Posterior vena cava (tissue), 2 donors: ENCODE measurements at regions of chr16 and their contacts with region 1.

Region 1: GRCh38 chr16:1812732-1813163 is 13.9 kb downstream of the HAGH start:
- DNase-seq: peak; percentile 79

Region 2: GRCh38 chr16:1763521-1764511 is 48.9 kb before region 1 on chr16:
- intact Hi-C with region 1: loop called in 1 of 2 experiments (anchors 5 kb)
- DNase-seq: no peak

Region 3: DNA sequence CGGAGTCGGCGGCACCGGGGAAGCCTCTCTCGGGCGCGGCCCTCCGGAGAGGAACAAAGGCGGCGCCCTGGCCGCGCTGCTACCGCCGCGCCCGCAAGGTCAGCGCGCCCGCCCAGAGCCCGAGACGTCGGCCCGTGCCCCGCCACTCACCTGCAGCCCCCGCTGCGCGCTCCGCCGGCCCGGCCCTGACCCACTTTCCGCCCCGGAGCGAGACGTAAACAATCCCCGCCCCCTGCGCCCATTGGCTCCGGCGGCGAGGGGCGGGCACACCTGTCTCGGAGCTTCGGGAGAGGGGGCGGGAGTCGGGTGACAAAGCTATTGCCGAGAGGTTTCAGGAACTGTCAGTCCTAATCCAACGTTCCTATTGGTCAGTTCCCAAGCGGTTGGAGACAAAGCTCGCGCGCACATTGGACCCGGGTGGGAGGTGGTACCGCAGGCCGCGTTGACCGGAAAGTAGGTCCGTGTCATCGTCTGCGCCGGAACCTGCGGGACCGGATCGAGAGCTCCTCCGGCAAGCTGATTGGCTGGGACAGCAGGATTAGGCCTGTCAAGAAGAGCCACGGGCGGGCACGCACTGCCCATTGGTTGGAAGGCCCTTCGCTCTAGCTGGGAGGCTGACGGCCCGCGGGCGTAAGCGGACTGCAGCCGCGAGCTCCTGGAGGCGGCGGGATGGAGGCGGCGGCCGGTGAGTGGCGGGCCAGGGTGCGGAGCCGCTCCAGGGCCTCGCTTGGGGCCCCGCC is 30.2 kb before region 1 on chr16 and contains the starts of genes NUBP2 and SPSB3:
- intact Hi-C with region 1: no loop called
- DNase-seq: peak; percentile 100
- total RNA-seq, gene NUBP2: 30.4 to 30.9 TPM
- total RNA-seq, gene SPSB3: 21.7 to 26.7 TPM

Region 4: DNA sequence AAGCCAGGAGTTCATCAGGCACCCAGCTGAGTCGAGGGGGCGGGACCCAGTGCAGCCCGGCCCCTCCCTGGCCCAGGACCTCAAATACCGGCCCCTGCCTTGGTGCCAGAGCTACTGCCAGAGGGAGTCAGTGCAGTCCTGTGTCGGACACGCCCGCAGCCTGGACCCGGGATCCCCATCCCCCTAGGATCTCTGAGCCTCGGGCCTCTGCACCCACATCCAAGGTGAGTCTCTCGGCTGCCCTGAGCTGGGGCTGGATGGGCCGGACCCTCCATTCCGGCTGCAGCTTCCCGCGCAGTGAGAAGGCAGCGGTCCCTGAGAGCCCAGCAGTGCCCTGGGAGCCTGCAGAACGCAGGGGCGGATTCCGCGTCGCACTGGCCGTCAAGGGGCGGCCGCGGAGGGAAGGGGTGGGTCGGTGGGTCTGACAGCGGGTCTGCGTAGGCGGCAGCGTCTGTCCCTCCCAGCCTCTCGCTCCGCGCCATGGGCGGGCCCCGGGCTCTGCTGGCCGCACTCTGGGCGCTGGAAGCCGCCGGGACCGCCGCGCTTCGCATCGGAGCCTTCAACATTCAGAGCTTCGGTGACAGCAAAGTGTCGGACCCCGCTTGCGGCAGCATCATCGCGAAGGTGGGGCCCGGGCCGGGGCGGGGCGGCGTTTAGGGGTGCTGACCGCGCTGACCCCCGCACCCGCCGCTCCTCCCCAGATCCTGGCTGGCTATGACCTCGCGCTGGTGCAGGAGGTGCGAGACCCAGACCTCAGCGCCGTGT is 423.8 kb after region 1 on chr16 and contains the start of gene DNASE1L2:
- intact Hi-C with region 1: loop called in 1 of 2 experiments (anchors 2 kb)
- DNase-seq: no peak
- total RNA-seq, gene DNASE1L2: 0.19 TPM in 1 of 2 donors, not detected in the other